Upper lobe of right lung (tissue), 1 donor: ENCODE measurements at regions of chr3 and their contacts with region 1.

Region 1: GRCh38 chr3:77039606-77040171 is at the start of gene ROBO2:
- DNase-seq: peak; percentile 66
- ATAC-seq: peak; percentile 67
- H3K4me3 ChIP-seq: peak within 1 kb of the TSS; percentile 54
- H3K27ac ChIP-seq: no peak within 1 kb of the TSS
- H3K4me1 ChIP-seq: no peaks in the 10 kb centered on the region
- H3K27me3 ChIP-seq: peaks cover 36% of the 10 kb centered on the region
- CTCF ChIP-seq: no peak
- total RNA-seq, gene ROBO2: 27.1 TPM

Region 2: GRCh38 chr3:76685858-76686257 is 353.8 kb before region 1 on chr3:
- intact Hi-C with region 1: no loop called
- DNase-seq: no peak
- ATAC-seq: no peak
- H3K4me3 ChIP-seq: no peak overlapping the region
- H3K27ac ChIP-seq: no peak overlapping the region
- H3K4me1 ChIP-seq: no peaks in the 10 kb centered on the region
- H3K27me3 ChIP-seq: no peaks in the 10 kb centered on the region
- CTCF ChIP-seq: no peak

Region 3: DNA sequence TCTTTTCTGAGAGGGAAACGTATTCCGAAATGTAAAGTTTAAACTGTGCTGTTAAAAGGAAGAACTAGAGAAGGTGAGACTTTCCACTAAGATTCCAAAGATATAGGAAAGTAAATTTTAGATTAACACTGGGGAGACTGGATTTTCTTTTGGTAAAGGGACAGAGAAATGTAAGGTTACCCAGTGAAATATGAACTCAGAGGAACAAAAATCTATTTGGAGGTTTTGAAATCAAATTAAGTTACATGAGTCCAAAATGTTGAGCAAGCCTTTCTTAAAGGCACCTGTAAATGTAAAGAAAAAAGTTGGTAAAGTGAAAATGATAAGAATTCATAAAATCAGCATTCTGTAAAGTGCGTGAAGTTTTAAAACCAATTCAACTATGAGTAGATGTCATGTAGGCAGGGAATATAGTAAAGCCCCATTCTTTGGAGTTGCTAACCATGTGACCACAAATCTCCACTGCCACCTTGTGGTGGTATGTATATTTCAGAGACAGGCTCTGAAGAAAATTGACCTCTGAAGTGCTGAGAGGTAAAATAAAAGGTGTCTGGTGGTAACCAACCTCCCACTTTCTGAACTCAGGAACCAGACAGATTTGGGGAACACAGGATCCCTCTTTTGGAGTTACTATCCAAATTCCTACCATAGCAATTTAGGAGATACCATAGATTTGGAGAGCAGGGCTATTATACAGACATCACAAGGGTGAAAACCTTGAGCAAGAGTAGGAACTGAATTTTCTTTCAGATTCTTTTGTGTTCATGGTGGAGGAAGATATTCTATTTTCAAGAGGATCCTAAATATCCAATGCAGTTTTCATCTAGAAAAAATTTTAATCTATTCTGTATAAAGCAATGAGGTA is 215.5 kb after region 1 on chr3:
- intact Hi-C with region 1: loop called (anchors 10 kb)
- DNase-seq: no peak
- ATAC-seq: peak; percentile 86
- H3K4me3 ChIP-seq: no peak overlapping the region
- H3K27ac ChIP-seq: no peak overlapping the region
- H3K4me1 ChIP-seq: no peaks in the 10 kb centered on the region
- H3K27me3 ChIP-seq: no peaks in the 10 kb centered on the region
- CTCF ChIP-seq: peak; percentile 66